BJ (cell line): ENCODE measurements at regions of chr16 and their contacts with region 1.

Region 1: DNA sequence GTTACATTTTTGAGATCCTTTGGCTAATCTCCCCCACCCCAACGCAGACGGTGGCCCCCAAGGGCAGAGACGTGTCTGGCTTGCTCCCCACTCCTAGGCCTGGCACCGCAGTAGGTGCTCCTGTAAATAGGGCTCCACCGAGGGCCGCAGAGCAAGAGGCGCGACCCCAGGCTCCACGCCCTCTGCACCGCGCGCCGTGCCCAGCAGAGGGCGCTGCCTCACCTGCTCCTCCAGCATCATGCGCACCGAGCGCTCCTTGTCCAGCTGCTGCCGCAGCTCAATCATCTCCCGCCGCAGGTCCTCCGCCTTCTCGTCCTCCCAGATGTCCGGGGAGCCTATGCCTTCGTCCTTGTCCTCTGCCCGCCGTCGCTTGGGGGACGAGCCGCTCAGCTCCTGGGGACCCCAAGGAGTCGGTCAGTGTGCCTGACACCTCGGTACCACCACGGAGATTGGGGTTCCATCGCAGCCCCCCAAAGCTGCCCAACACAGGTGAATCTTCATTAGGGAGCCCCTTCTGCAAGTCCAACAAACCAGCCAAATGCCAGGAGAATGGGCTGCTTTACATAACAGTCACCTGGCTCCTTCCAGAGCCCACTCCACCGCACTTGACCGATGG is 11.2 kb downstream of the TFAP4 start:
- DNase-seq: no peak
- H3K4me3 ChIP-seq: no peak overlapping the region
- H3K27me3 ChIP-seq: no peaks in the 10 kb centered on the region
- CTCF ChIP-seq: peak; percentile 66

Region 2: DNA sequence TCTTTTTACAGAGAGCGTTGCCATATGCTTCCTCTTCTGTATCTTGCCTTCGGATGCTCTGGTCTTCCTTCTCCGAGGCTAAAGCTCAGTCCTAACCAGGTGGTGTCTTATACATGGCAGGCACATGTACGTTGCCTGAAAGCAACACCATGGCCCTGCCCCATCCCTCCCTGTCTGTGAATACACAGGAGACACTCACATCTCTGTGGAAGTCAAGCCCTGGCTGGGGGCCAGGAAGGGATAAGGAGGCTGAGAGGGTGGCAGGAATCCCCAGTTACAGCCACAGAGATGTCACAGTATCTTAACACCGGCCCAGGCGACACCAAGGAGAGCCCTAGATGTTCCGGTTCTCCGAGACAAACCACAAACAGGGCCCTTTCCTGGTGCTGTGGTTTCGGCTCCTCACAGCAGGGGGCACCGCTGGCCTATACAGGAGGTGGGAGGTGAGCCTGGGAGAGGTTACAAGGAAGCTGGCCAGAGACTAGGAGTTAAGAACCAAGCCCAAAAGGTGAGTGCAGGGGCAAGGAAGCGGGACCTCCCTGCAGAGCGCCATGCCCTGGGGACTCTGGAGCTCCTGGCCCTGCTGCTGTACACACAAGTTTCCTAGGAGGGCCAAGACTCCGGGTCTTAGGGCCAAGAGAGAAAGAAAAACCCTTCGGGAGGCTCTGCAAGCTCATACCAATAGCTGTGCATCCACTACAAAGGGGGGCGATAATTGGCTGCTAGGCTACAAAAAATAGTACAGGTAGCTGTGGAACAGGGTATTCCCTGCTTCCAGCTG is 61.5 kb before region 1 on chr16:
- CTCF ChIA-PET with region 1: interaction called, 13 read pairs
- POLR2A ChIA-PET with region 1: no interaction called
- DNase-seq: peak; percentile 7
- H3K4me3 ChIP-seq: no peak overlapping the region
- H3K27me3 ChIP-seq: no peaks in the 10 kb centered on the region
- CTCF ChIP-seq: peak; percentile 77